CD8-positive, alpha-beta T cell (primary cell): ENCODE measurements at regions of chr3 and their contacts with region 1.

Region 1: GRCh38 chr3:129120254-129121004 is 1.2 kb downstream of the RAB43 start:
- DNase-seq: peak; percentile 79 to 97 (median 92)
- ATAC-seq: peak; percentile 51
- H3K4me3 ChIP-seq: peak overlapping the region; percentile 85 to 93
- H3K4me3 Mint-ChIP-seq: peak overlapping the region; percentile 94
- H3K27ac ChIP-seq: peak overlapping the region; percentile 74
- H3K27ac Mint-ChIP-seq: peak overlapping the region; percentile 99
- H3K4me1 ChIP-seq: peaks cover 33% of the 10 kb centered on the region
- H3K4me1 Mint-ChIP-seq: peaks cover 59% of the 10 kb centered on the region
- H3K27me3 ChIP-seq: no peaks in the 10 kb centered on the region
- H3K27me3 Mint-ChIP-seq: no peaks in the 10 kb centered on the region
- CTCF ChIP-seq: peak; percentile 26

Region 2: DNA sequence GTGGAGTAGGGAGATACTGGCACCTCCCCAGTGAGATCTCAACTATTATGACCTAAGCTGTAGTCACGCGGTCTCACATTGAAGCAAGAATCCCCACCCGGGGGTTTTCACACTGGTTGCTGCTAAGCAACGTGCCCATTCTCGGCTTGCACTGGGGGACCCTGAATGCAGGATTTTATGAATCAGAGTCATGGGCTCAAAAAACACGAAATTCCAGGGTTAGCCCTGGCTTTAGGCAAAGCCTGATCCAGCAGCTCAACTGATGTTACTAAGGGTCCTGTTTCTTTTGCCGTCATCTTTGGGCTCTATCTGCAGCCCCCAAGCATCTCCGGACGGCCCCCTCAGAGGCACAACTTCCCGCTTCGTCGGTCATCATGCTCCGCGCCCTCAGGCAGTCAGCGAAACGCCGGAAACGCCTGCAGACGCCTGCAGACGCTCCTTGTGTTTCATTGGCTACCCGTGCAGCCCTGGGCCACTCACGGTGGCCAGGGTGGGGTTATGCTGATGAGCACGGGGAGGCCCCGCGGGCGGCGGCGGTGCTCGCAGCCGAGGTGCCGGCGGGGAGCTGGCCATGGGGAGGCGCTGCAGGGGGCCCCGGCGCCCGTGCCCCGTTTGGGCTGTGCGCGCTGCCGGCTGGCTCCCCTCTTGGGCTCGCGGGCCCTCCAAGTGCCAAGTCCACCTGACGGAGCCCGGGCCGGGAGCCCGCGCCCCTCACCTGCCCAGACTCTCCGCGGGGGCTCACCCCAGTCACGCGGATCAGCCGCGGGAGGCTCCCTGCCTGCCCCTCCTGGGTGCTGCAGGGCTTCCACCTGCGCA is 93.5 kb before region 1 on chr3:
- CTCF ChIA-PET with region 1: interaction called, 3 read pairs
- POLR2A ChIA-PET with region 1: interaction called, 17 read pairs
- intact Hi-C with region 1: loop called (anchors 1 to 2 kb)
- DNase-seq: peak; percentile 85 to 98 (median 91)
- ATAC-seq: peak; percentile 98
- H3K4me3 ChIP-seq: peak overlapping the region; percentile 58 to 61
- H3K4me3 Mint-ChIP-seq: peak overlapping the region; percentile 85
- H3K27ac ChIP-seq: peak overlapping the region; percentile 75 to 80
- H3K27ac Mint-ChIP-seq: peak overlapping the region; percentile 99
- H3K4me1 ChIP-seq: peaks cover 22% of the 10 kb centered on the region
- H3K4me1 Mint-ChIP-seq: peaks cover 26% of the 10 kb centered on the region
- H3K27me3 ChIP-seq: no peaks in the 10 kb centered on the region
- H3K27me3 Mint-ChIP-seq: no peaks in the 10 kb centered on the region
- CTCF ChIP-seq: peak; percentile 84

Region 3: DNA sequence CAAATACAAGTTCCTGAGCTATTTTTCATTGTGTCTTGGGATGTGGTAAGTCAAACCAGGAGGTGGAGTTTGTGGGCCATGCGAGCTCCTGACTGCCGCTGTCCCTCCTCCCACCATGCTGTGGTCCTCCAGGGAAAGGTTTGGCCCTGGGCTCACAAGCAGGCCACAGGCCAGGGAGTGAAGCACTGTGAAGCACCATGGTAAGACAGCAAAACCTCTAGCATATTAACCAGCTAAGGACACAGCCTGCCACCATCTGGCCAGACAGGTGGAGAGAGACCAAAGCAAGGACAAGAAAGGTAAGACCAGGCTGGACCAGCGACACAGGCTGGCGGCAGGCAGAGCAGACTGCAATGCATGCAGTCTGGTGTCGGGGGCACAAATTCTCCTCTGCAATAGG is 14.1 kb before region 1 on chr3:
- CTCF ChIA-PET with region 1: interaction called, 8 read pairs
- POLR2A ChIA-PET with region 1: interaction called, 26 read pairs
- intact Hi-C with region 1: loop called in 1 of 2 experiments (anchors 2 kb)
- DNase-seq: peak in 1 of 9 experiments; percentile 5
- ATAC-seq: no peak
- H3K4me3 ChIP-seq: no peak overlapping the region
- H3K4me3 Mint-ChIP-seq: no peak overlapping the region
- H3K27ac ChIP-seq: no peak overlapping the region
- H3K27ac Mint-ChIP-seq: peak overlapping the region; percentile 82
- H3K4me1 ChIP-seq: peaks cover 76% of the 10 kb centered on the region
- H3K4me1 Mint-ChIP-seq: peaks cover 80% of the 10 kb centered on the region
- H3K27me3 ChIP-seq: no peaks in the 10 kb centered on the region
- H3K27me3 Mint-ChIP-seq: no peaks in the 10 kb centered on the region
- CTCF ChIP-seq: no peak

Region 4: DNA sequence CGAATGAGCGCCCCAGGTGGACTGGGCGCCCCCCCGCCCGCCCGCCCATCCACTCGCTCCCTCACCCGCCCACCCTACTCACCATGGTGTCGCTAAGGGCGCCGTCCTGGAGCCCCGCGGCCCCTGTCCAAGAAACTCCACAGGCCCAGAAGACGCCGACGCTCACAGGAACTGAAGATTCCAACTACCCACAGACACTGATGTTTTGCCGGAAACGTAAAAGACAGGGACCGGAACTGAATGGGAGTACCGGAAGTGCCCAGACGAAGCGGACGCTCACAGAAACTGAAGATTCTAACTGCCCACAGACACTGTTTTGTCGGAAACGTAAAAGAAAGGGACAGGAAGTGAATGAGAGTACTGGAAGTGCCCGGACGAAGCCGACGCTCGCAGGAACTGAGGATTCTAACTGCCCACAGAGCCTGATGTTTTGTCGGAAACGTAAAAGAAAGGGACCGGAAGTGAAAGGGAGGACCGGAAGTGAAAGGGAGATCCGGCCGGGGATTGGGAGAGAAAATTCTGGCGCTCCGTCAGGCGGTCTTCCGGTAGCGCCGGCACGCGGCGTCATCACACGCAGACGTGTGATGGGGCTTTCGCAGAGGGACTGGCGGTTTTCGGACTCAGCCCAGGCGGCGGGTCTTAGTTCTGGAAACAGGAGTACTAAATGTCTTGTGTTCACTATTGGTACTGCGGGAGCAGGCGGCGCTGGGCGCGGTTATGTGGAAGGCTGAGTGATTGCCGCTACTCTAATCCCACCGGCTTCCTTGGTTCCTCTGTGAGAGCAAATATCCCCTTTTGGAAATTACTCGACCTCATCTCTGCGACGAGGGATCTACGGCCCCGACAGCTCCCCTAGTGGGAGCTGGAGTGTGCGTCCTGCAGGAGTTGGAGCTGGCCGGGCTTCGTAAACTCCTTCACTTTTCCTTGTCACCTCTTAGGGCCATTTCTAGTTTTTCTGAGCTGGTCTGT is 40.7 kb after region 1 on chr3 and contains the start of gene ISY1:
- CTCF ChIA-PET with region 1: interaction called, 3 read pairs
- POLR2A ChIA-PET with region 1: interaction called, 21 read pairs
- intact Hi-C with region 1: loop called (anchors 1 kb)
- DNase-seq: peak; percentile 71 to 97 (median 86)
- ATAC-seq: peak; percentile 80
- H3K4me3 ChIP-seq: peak within 1 kb of the TSS; percentile 84 to 94
- H3K4me3 Mint-ChIP-seq: peak within 1 kb of the TSS; percentile 95
- H3K27ac ChIP-seq: peak within 1 kb of the TSS; percentile 92 to 99
- H3K27ac Mint-ChIP-seq: peak within 1 kb of the TSS; percentile 96
- H3K4me1 ChIP-seq: peaks cover 18% of the 10 kb centered on the region
- H3K4me1 Mint-ChIP-seq: peaks cover 43% of the 10 kb centered on the region
- H3K27me3 ChIP-seq: no peaks in the 10 kb centered on the region
- H3K27me3 Mint-ChIP-seq: no peaks in the 10 kb centered on the region
- CTCF ChIP-seq: peak; percentile 70
- total RNA-seq, gene ISY1: 35.2 to 38.7 TPM

Region 5: GRCh38 chr3:129195731-129196256 is 75.4 kb after region 1 on chr3:
- CTCF ChIA-PET with region 1: no interaction called
- POLR2A ChIA-PET with region 1: no interaction called
- intact Hi-C with region 1: no loop called
- DNase-seq: no peak
- ATAC-seq: no peak
- H3K4me3 ChIP-seq: no peak overlapping the region
- H3K4me3 Mint-ChIP-seq: no peak overlapping the region
- H3K27ac ChIP-seq: no peak overlapping the region
- H3K27ac Mint-ChIP-seq: no peak overlapping the region
- H3K4me1 ChIP-seq: no peaks in the 10 kb centered on the region
- H3K4me1 Mint-ChIP-seq: no peaks in the 10 kb centered on the region
- H3K27me3 ChIP-seq: no peaks in the 10 kb centered on the region
- H3K27me3 Mint-ChIP-seq: no peaks in the 10 kb centered on the region
- CTCF ChIP-seq: no peak

Region 6: GRCh38 chr3:129278439-129278970 is 158.1 kb after region 1 on chr3 and contains the start of gene HMCES:
- CTCF ChIA-PET with region 1: no interaction called
- POLR2A ChIA-PET with region 1: interaction called, 11 read pairs
- intact Hi-C with region 1: loop called (anchors 2 kb)
- DNase-seq: peak; percentile 88 to 98 (median 96)
- ATAC-seq: peak; percentile 94
- H3K4me3 ChIP-seq: peak within 1 kb of the TSS; percentile 59 to 92
- H3K4me3 Mint-ChIP-seq: peak within 1 kb of the TSS; percentile 95
- H3K27ac ChIP-seq: peak within 1 kb of the TSS; percentile 88 to 93
- H3K27ac Mint-ChIP-seq: peak within 1 kb of the TSS; percentile 97
- H3K4me1 ChIP-seq: peaks cover 39% of the 10 kb centered on the region
- H3K4me1 Mint-ChIP-seq: peaks cover 42% of the 10 kb centered on the region
- H3K27me3 ChIP-seq: no peaks in the 10 kb centered on the region
- H3K27me3 Mint-ChIP-seq: no peaks in the 10 kb centered on the region
- CTCF ChIP-seq: no peak
- total RNA-seq, gene HMCES: 69.5 to 78.7 TPM